B cell (primary cell): ENCODE measurements at regions of chr18 and their contacts with region 1.

Region 1: DNA sequence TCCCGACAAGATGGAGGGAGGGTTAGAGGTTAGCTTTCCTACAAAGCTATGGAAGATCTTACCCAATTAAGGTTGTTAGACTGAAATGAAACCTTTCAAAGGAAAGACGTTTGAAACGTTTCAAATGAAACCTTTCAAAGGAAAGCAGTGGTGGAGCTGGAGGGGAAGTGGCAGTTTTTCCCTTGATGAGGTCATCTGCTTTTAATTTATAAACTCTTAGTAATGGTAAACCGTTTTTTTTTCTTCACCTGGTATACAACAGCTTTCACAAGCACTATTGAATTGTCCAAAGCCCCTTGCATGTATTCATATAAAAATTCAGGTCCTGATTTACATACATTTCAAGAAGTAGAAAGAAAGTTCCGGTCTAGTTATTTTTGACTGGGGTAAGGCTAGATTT is 7.4 kb downstream of the PMAIP1 start:
- DNase-seq: peak; percentile 53
- ATAC-seq: no peak
- H3K4me3 ChIP-seq: peak overlapping the region in 2 of 5 experiments; percentile 12 to 45
- H3K4me3 Mint-ChIP-seq: peak overlapping the region; percentile 68
- H3K27ac ChIP-seq: peak overlapping the region; percentile 47 to 88
- H3K27ac Mint-ChIP-seq: peak overlapping the region; percentile 86
- H3K4me1 ChIP-seq: peaks cover 58 to 62% of the 10 kb centered on the region in 2 donors
- H3K4me1 Mint-ChIP-seq: peaks cover 64% of the 10 kb centered on the region
- H3K27me3 ChIP-seq: no peaks in the 10 kb centered on the region
- H3K27me3 Mint-ChIP-seq: no peaks in the 10 kb centered on the region
- CTCF ChIP-seq: no peak

Region 2: DNA sequence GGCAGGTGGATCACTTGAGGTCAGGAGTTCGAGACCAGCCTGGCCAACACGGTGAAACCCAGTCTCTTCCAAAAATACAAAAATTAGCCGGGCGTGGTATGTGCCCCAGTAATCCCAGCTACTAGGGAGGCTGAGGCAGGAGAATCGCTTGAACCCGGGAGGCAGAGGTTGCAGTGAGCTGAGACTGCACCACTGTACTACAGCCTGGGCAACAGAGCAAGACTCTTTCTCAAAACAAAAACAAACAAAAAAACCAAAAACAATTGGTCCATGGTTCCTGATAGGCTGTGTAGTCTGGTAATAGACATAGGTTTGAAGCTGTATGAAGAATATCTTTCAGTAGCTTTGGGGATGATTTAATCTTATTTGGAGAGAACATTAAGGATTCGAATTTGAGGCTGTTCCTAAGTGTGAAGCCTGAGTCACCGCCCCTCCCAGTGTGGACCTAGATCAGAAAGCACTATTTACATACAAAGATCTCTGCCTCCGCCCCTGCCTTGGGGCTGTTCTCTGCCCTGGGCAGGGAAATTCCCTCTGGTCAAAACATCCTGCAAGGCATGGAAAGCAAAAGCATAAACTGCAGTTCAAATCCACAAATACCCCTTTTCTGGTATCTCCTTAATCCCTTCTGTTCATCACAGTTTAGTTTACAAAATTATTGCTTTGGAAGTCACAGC is 60.2 kb before region 1 on chr18:
- CTCF ChIA-PET with region 1: no interaction called
- POLR2A ChIA-PET with region 1: no interaction called
- intact Hi-C with region 1: no loop called
- DNase-seq: peak; percentile 71
- ATAC-seq: peak; percentile 82
- H3K4me3 ChIP-seq: no peak overlapping the region
- H3K4me3 Mint-ChIP-seq: peak overlapping the region; percentile 46
- H3K27ac ChIP-seq: no peak overlapping the region
- H3K27ac Mint-ChIP-seq: peak overlapping the region; percentile 74
- H3K4me1 ChIP-seq: peaks cover 26 to 37% of the 10 kb centered on the region in 2 donors
- H3K4me1 Mint-ChIP-seq: peaks cover 33% of the 10 kb centered on the region
- H3K27me3 ChIP-seq: no peaks in the 10 kb centered on the region
- H3K27me3 Mint-ChIP-seq: no peaks in the 10 kb centered on the region
- CTCF ChIP-seq: no peak

Region 3: GRCh38 chr18:59885579-59886163 is 21.5 kb before region 1 on chr18:
- CTCF ChIA-PET with region 1: interaction called, 10 read pairs
- POLR2A ChIA-PET with region 1: interaction called, 4 read pairs
- intact Hi-C with region 1: no loop called
- DNase-seq: peak; percentile 75
- ATAC-seq: peak; percentile 78
- H3K4me3 ChIP-seq: peak overlapping the region in 2 of 5 experiments; percentile 32 to 44
- H3K4me3 Mint-ChIP-seq: peak overlapping the region; percentile 60
- H3K27ac ChIP-seq: peak overlapping the region; percentile 65 to 68
- H3K27ac Mint-ChIP-seq: peak overlapping the region; percentile 84
- H3K4me1 ChIP-seq: peaks cover 36 to 42% of the 10 kb centered on the region in 2 donors
- H3K4me1 Mint-ChIP-seq: peaks cover 52% of the 10 kb centered on the region
- H3K27me3 ChIP-seq: no peaks in the 10 kb centered on the region
- H3K27me3 Mint-ChIP-seq: no peaks in the 10 kb centered on the region
- CTCF ChIP-seq: no peak

Region 4: GRCh38 chr18:59918320-59918755 is 11.2 kb after region 1 on chr18:
- CTCF ChIA-PET with region 1: interaction called, 9 read pairs
- POLR2A ChIA-PET with region 1: interaction called, 5 read pairs
- intact Hi-C with region 1: loop called (anchors 1 kb)
- DNase-seq: peak; percentile 54
- ATAC-seq: peak; percentile 82
- H3K4me3 ChIP-seq: peak overlapping the region in 4 of 5 experiments; percentile 15 to 43 (median 34)
- H3K4me3 Mint-ChIP-seq: peak overlapping the region; percentile 74
- H3K27ac ChIP-seq: no peak overlapping the region
- H3K27ac Mint-ChIP-seq: peak overlapping the region; percentile 68
- H3K4me1 ChIP-seq: peaks cover 28 to 39% of the 10 kb centered on the region in 2 donors
- H3K4me1 Mint-ChIP-seq: peaks cover 35% of the 10 kb centered on the region
- H3K27me3 ChIP-seq: no peaks in the 10 kb centered on the region
- H3K27me3 Mint-ChIP-seq: no peaks in the 10 kb centered on the region
- CTCF ChIP-seq: no peak

Region 5: DNA sequence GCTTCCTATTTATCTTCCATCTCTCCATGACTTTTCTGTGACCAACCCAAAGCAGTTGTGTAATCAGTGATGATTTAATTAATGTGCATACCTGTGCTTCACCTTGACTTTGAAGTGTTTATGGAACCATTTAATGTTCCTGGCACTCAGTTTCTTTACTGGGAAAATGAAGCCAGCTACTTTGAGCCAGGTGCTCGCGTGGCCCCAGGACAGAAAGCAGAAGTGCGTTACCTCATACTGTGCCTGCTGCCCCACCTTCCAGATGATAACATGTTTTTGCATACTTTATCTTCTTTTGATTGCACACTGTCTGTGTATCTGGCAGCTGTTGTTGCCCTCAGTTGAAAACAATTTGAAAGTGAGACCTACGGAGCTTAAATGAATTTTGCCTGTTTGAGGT is 53.9 kb after region 1 on chr18:
- CTCF ChIA-PET with region 1: interaction called, 4 read pairs
- POLR2A ChIA-PET with region 1: interaction called, 6 read pairs
- intact Hi-C with region 1: loop called (anchors 2 kb)
- DNase-seq: peak; percentile 73
- ATAC-seq: peak; percentile 89
- H3K4me3 ChIP-seq: peak overlapping the region in 1 of 5 experiments; percentile 32
- H3K4me3 Mint-ChIP-seq: peak overlapping the region; percentile 68
- H3K27ac ChIP-seq: peak overlapping the region; percentile 50 to 61
- H3K27ac Mint-ChIP-seq: peak overlapping the region; percentile 90
- H3K4me1 ChIP-seq: peaks cover 40 to 44% of the 10 kb centered on the region in 2 donors
- H3K4me1 Mint-ChIP-seq: peaks cover 44% of the 10 kb centered on the region
- H3K27me3 ChIP-seq: no peaks in the 10 kb centered on the region
- H3K27me3 Mint-ChIP-seq: no peaks in the 10 kb centered on the region
- CTCF ChIP-seq: no peak

Region 6: DNA sequence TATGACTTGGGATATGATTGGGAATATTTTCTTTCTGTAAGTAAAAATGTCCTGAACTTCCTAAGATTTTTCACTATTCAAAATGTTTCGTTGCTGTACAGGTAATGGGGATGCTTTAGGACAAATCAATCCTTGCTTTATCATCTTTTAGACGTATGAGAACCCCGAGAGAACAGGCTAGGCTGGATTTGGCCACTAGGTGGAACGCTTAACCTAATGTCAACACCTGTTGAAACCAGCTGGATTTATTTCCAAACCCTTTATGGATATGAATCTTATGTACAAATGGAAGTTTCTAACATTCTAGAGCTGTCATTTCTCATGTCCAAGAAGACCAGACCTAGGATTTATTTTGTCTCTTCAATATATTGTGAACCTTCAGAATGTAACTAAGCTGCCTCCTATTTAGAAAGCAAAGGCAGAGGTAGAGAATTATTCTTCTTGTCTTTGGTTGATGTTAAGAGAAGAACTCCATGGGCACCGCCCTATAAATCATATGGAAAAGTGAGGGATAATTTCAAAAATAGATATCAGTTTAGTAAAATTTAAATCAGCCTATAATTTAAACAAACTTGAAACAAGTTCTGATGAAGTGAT is 89.3 kb after region 1 on chr18:
- CTCF ChIA-PET with region 1: interaction called, 11 read pairs
- POLR2A ChIA-PET with region 1: no interaction called
- intact Hi-C with region 1: no loop called
- DNase-seq: no peak
- ATAC-seq: no peak
- H3K4me3 ChIP-seq: no peak overlapping the region
- H3K4me3 Mint-ChIP-seq: no peak overlapping the region
- H3K27ac ChIP-seq: no peak overlapping the region
- H3K27ac Mint-ChIP-seq: no peak overlapping the region
- H3K4me1 ChIP-seq: no peaks in the 10 kb centered on the region
- H3K4me1 Mint-ChIP-seq: no peaks in the 10 kb centered on the region
- H3K27me3 ChIP-seq: peaks cover 0 to 3% (median 0%) of the 10 kb centered on the region in 4 experiments
- H3K27me3 Mint-ChIP-seq: peaks cover 35% of the 10 kb centered on the region
- CTCF ChIP-seq: peak; percentile 64